Calu3 (cell line): ENCODE measurements at regions of chrX and their contacts with region 1.

Region 1: DNA sequence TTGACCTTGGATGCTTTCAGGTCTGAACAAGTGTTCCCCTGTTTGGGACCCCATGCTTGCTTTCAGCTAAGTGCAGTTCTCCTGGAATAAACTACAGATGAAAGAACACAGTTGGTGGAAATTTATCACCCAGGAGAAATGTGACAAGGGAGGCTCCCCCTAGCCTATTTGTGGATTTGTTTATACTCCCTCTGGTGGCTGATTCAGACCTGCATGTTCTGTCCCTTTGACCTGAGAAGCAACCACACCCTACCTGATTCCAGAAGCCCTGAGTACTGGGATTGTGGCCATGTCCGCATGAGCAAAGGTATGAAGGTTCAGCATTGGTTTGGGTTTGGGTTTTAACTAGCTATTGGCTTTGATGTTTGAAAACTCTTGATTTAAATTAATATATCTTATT is 440.9 kb downstream of the MID1IP1 start:
- DNase-seq: peak; percentile 54
- H3K4me3 Mint-ChIP-seq: no peak overlapping the region
- H3K27ac Mint-ChIP-seq: no peak overlapping the region
- H3K4me1 Mint-ChIP-seq: no peaks in the 10 kb centered on the region
- H3K27me3 Mint-ChIP-seq: no peaks in the 10 kb centered on the region
- CTCF ChIP-seq: peak; percentile 26

Region 2: GRCh38 chrX:38754102-38754790 is 487.9 kb before region 1 on chrX:
- CTCF ChIA-PET with region 1: no interaction called
- intact Hi-C with region 1: loop called (anchors 2 kb)
- DNase-seq: peak; percentile 51
- H3K4me3 Mint-ChIP-seq: no peak overlapping the region
- H3K27ac Mint-ChIP-seq: no peak overlapping the region
- H3K4me1 Mint-ChIP-seq: no peaks in the 10 kb centered on the region
- H3K27me3 Mint-ChIP-seq: peaks cover 40% of the 10 kb centered on the region
- CTCF ChIP-seq: peak; percentile 52

Region 3: GRCh38 chrX:38768079-38768478 is 474.1 kb before region 1 on chrX:
- CTCF ChIA-PET with region 1: no interaction called
- intact Hi-C with region 1: loop called (anchors 5 kb)
- DNase-seq: no peak
- H3K4me3 Mint-ChIP-seq: no peak overlapping the region
- H3K27ac Mint-ChIP-seq: no peak overlapping the region
- H3K4me1 Mint-ChIP-seq: no peaks in the 10 kb centered on the region
- H3K27me3 Mint-ChIP-seq: no peaks in the 10 kb centered on the region
- CTCF ChIP-seq: no peak

Region 4: GRCh38 chrX:38891641-38892413 is 350.4 kb before region 1 on chrX:
- CTCF ChIA-PET with region 1: no interaction called
- intact Hi-C with region 1: no loop called
- DNase-seq: no peak
- H3K4me3 Mint-ChIP-seq: no peak overlapping the region
- H3K27ac Mint-ChIP-seq: no peak overlapping the region
- H3K4me1 Mint-ChIP-seq: no peaks in the 10 kb centered on the region
- H3K27me3 Mint-ChIP-seq: no peaks in the 10 kb centered on the region
- CTCF ChIP-seq: no peak

Region 5: GRCh38 chrX:39012621-39013111 is 229.5 kb before region 1 on chrX:
- CTCF ChIA-PET with region 1: no interaction called
- intact Hi-C with region 1: loop called (anchors 10 kb)
- DNase-seq: no peak
- H3K4me3 Mint-ChIP-seq: no peak overlapping the region
- H3K27ac Mint-ChIP-seq: no peak overlapping the region
- H3K4me1 Mint-ChIP-seq: peaks cover 69% of the 10 kb centered on the region
- H3K27me3 Mint-ChIP-seq: no peaks in the 10 kb centered on the region
- CTCF ChIP-seq: no peak

Region 6: DNA sequence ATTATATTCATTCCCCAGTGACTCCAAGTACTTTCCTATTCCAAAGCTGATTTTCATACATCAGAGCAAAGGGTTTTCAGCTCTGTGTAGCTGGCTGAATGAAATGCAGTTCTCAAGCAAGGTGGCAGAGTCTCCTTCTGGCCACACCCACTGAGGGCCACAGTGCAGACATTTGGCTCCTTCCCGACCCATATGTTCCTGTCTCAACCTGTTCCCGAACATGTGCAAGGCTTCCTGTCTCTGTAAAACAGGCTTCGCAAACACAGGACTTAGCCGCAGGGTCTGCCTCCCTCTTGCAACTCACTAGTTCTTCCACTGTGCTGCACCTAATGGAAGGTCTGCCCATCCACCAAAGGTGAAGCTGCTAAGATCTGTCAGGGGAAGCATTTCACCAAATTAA is 191.8 kb before region 1 on chrX:
- CTCF ChIA-PET with region 1: no interaction called
- intact Hi-C with region 1: no loop called
- DNase-seq: no peak
- H3K4me3 Mint-ChIP-seq: no peak overlapping the region
- H3K27ac Mint-ChIP-seq: no peak overlapping the region
- H3K4me1 Mint-ChIP-seq: no peaks in the 10 kb centered on the region
- H3K27me3 Mint-ChIP-seq: peaks cover 11% of the 10 kb centered on the region
- CTCF ChIP-seq: no peak

Region 7: GRCh38 chrX:39104745-39105144 is 137.4 kb before region 1 on chrX:
- CTCF ChIA-PET with region 1: no interaction called
- intact Hi-C with region 1: no loop called
- DNase-seq: no peak
- H3K4me3 Mint-ChIP-seq: no peak overlapping the region
- H3K27ac Mint-ChIP-seq: no peak overlapping the region
- H3K4me1 Mint-ChIP-seq: no peaks in the 10 kb centered on the region
- H3K27me3 Mint-ChIP-seq: no peaks in the 10 kb centered on the region
- CTCF ChIP-seq: no peak

Region 8: DNA sequence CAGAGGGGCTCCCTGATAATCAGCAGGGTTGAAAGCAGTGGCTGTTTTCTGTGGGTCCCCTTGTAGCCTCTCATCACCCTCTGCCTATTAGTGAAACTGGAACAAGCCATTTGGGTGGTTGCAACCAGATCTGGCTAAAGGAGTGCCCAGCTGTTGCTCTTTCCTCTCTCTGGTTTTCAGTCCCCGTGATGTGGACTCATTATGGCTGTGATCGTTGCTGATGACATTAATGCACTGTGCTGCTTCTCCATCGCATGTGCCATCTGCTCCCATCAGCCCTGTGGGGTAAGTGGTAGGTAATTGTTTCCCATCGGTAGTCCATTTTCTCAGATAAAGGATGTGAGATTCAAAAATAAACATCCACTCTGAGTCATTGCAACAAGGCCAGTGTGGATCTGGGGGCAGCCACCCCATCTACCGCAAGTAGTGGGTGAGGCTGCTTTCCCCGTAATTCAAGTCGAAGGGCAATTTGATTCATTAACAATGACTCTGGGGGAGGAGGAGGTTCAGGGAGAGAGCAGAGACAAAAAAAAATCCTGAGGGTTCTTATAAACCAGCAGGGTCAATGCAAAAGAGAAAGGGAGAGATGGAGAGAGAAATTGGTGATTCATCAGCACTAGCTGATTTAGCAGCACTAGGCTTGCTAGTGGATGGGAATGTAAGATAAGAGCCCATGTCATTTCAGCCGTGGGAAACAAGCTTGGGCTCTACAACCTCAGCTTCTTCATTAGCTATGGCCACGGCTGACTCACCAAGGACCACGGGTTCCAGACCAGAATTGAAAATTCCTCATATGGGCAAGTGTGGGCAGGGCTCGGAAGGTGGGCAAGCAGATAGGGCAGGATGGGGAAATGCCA is 83.2 kb before region 1 on chrX:
- CTCF ChIA-PET with region 1: no interaction called
- intact Hi-C with region 1: loop called (anchors 5 kb)
- DNase-seq: no peak
- H3K4me3 Mint-ChIP-seq: no peak overlapping the region
- H3K27ac Mint-ChIP-seq: no peak overlapping the region
- H3K4me1 Mint-ChIP-seq: peaks cover 33% of the 10 kb centered on the region
- H3K27me3 Mint-ChIP-seq: peaks cover 40% of the 10 kb centered on the region
- CTCF ChIP-seq: no peak